Activated CD4-positive, alpha-beta T cell treated with anti-CD3 and anti-CD28 coated beads, Interleukin-2, amount 10 ng/mL, durations not matched to agents 24 days and 14 days (primary cell): ENCODE measurements at regions of chr16 and their contacts with region 1.

Region 1: DNA sequence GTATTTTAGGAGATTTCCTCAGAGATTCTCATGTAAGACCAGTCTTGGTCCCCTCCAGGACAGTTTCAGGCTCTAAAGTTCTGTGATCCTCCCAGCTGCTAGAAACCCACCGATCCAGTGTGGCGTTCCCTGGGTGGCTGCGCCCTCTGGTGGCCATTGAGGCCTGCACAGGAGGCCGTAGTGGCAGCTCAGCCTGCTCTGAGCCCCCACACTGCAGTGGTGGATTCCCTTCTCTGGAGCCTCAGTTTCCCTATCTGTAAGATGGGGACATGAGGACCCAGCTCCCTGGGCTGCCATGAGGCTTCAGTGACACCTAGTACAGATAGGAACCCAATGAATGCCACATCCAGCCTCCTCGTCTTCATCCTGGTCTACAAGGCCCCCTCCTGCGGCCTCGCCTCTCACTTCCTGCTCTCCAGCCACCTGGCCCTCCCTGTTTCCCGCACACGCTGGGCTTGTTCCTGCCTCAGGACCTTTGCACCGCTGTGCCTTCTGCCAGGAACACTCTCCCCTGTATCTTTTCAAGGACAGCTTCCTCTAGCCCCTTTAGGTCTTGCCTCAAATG is 16.5 kb downstream of the CCDC102A start:
- DNase-seq: peak; percentile 94
- H3K4me3 Mint-ChIP-seq: no peak overlapping the region
- H3K27ac Mint-ChIP-seq: no peak overlapping the region
- H3K4me1 Mint-ChIP-seq: peaks cover 7% of the 10 kb centered on the region
- H3K27me3 Mint-ChIP-seq: no peaks in the 10 kb centered on the region

Region 2: DNA sequence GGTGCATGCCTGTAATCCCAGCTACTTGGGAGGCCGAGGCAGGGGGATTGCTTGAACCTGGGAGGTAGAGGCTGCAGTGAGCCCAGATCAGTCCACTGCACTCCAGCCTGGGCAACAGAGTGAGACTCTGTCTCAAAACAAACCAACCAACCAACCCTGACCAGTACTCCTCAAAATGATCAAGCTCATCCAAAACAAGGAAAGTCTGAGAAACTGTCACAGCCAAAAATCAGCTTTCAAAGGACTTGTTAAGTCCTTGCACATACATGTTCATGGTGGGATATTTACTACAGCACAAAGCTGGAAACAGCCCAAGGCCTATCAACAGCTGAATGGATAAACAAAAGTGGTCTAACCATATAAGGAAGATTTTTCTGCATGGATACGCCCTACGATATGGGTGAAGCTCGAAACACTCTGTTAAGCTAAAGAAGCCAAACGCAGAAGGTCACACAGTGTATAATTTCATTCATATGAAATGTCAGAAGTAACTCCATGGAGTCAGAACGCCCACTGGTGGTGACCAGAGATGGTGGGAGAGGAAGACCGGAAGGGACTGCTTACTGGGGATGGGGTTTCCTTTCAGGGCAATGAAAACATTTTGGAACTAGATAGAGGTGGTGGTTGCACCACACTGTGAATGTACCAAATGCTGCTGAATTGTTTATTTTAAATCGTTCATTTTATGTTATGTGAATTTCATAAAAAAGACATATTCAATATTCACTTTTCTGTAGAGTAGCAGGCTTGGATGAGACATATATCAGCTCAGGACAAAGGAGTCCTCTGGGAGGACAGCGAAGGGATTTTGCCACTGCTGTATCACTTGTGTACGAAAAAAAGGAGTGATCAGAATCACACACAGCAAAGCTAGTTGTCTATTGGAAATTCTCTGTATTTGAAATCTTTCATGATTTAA is 97.6 kb before region 1 on chr16:
- intact Hi-C with region 1: loop called (anchors 1 kb)
- DNase-seq: no peak
- H3K4me3 Mint-ChIP-seq: no peak overlapping the region
- H3K27ac Mint-ChIP-seq: no peak overlapping the region
- H3K4me1 Mint-ChIP-seq: peaks cover 8% of the 10 kb centered on the region
- H3K27me3 Mint-ChIP-seq: peaks cover 2% of the 10 kb centered on the region

Region 3: DNA sequence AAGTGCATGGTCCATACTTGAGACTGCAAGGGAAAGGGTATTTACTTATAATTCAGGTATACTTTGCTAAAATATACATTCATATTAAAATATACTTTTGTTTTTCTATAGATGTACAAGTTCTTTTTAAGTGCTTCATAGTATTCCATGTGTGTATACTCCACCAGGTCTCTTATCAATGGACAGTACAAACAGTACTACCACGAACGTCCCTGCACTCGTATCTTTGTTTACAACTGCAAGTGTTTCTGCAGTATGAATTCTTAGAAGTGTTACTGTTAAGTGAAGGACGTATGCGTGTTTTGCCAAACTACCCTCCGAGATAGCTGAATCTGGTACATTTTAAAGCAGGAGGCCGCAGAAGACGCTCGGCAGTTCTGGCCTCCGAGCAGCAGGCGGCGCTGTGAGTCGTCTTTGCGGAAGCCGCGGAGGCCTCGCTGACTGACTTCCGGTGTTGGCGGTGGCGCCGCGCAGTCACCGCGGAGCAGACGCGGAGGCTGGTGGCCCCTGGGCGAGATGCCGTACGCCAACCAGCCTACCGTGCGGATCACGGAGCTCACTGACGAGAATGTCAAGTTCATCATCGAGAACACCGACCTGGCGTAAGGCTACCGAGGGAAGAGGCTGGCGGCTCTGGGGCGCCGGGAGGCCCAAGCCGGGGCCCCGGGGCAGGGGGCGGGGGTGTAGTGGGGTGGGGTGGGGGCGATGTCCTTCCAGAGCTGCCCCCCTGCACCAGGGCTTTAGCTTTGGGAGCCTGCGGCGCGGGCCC is 57.5 kb before region 1 on chr16 and contains the start of gene POLR2C:
- intact Hi-C with region 1: loop called (anchors 2 kb)
- DNase-seq: peak; percentile 98
- H3K4me3 Mint-ChIP-seq: peak within 1 kb of the TSS; percentile 96
- H3K27ac Mint-ChIP-seq: peak within 1 kb of the TSS; percentile 100
- H3K4me1 Mint-ChIP-seq: peaks cover 27% of the 10 kb centered on the region
- H3K27me3 Mint-ChIP-seq: no peaks in the 10 kb centered on the region
- total RNA-seq, gene POLR2C: 88.5 and 90.7 TPM in 2 replicates

Region 4: GRCh38 chr16:57475711-57476339 is 44.1 kb before region 1 on chr16:
- intact Hi-C with region 1: loop called (anchors 1 kb)
- DNase-seq: peak; percentile 95
- H3K4me3 Mint-ChIP-seq: peak overlapping the region; percentile 55
- H3K27ac Mint-ChIP-seq: peak overlapping the region; percentile 83
- H3K4me1 Mint-ChIP-seq: peaks cover 14% of the 10 kb centered on the region
- H3K27me3 Mint-ChIP-seq: peaks cover 2% of the 10 kb centered on the region